K562 (cell line): ENCODE measurements at regions of chr20 and their contacts with region 1.

Region 1: DNA sequence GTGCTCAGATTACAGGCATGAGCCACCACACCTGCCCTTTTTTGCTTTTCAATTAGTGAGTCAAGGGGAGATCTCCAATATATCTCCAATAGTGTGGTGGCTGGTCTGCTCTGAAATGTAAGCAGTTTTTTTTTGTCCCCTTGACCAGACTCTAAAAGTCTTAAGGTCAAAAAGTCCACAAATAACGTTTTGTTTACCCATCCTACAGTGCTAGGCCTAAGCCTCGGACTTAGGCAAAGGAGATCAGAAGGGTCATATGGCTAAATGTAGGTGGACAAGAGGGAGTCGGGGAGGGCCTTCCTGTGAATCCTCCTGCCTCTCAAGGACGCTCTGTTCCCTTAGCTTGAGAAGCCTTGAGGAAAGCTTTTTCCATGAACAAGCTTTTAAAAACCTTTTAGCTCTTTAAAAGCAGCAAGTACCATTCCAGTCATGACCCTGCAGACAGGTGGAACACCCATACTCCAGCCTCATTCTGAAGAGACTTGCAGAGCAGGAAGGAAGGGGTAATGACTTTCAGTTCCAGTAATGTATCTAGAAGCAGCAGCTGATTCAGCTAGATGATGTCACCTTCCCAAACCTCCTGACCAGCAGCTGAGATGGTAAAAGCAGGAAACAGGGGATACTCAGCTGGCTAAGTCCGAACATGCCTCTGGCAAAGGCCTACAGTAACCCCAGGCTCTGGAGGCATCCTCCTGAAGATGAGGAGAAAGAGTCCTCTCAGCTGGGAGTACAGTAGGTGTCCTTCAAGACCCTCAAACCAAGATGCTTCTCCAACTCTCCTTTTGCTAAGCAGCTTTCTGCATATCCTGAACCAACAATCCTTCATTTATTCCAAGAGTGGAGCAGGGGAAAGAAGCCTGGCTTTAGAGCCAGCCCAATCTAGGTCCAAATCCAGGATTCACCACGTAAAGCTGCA is 23.6 kb downstream of the BCL2L1 start:
- DNase-seq: peak in 2 of 4 experiments; percentile 57 to 75
- ATAC-seq: peak; percentile 70
- H3K4me3 ChIP-seq: no peak overlapping the region
- H3K27ac ChIP-seq: peak overlapping the region; percentile 51; the same call in 2 of the 3 replicates
- H3K4me1 ChIP-seq: peaks cover 27 to 60% of the 10 kb centered on the region in 2 experiments
- H3K27me3 ChIP-seq: no peaks in the 10 kb centered on the region
- CTCF ChIP-seq: no peak
- EP300 ChIP-seq: peak; percentile 41; the same call in 1 of the 2 replicates
- POLR2A ChIP-seq: no peak
- RAD21 ChIP-seq: no peak

Region 2: DNA sequence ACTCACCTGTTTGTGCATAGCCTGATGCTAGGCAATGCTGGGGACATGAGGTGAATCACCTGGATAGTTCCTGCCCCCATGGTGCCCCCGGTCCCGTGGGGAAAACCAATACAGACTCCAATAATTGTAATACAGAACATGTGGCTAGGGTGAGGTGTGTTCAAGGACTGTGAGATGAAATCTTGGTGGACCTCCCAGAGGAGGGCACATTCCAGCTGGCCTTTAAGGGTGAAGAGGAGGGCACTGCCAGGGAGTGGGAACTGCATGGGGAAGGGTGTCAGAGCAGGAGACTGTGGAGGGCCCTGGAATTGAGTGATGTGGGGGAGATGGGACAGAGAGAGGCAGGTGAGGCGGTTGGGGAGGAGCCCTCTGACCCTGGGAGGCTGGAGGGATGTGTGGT is 58.8 kb before region 1 on chr20:
- CTCF ChIA-PET with region 1: no interaction called
- POLR2A ChIA-PET with region 1: no interaction called
- in situ Hi-C with region 1: no loop called
- intact Hi-C with region 1: no loop called
- DNase-seq: peak in 1 of 4 experiments; percentile 2
- ATAC-seq: no peak
- H3K4me3 ChIP-seq: no peak overlapping the region
- H3K27ac ChIP-seq: no peak overlapping the region
- H3K4me1 ChIP-seq: peaks cover 8 to 15% of the 10 kb centered on the region in 2 experiments
- H3K27me3 ChIP-seq: no peaks in the 10 kb centered on the region
- CTCF ChIP-seq: no peak
- EP300 ChIP-seq: no peak
- POLR2A ChIP-seq: no peak
- RAD21 ChIP-seq: no peak

Region 3: GRCh38 chr20:31674895-31675827 is 23.9 kb before region 1 on chr20:
- CTCF ChIA-PET with region 1: no interaction called
- POLR2A ChIA-PET with region 1: interaction called, 11 read pairs
- in situ Hi-C with region 1: no loop called
- intact Hi-C with region 1: no loop called
- DNase-seq: peak; percentile 76 to 91 (median 78)
- ATAC-seq: peak; percentile 60
- H3K4me3 ChIP-seq: peak overlapping the region; percentile 20; the same call in 1 of the 2 replicates
- H3K27ac ChIP-seq: peak overlapping the region; percentile 94
- H3K4me1 ChIP-seq: peaks cover 84 to 91% of the 10 kb centered on the region in 2 experiments
- H3K27me3 ChIP-seq: no peaks in the 10 kb centered on the region
- CTCF ChIP-seq: no peak
- EP300 ChIP-seq: peak; percentile 95
- POLR2A ChIP-seq: peak; percentile 70
- RAD21 ChIP-seq: peak in 1 of 2 experiments; percentile 12; a peak in 1 of 4 replicates

Region 4: DNA sequence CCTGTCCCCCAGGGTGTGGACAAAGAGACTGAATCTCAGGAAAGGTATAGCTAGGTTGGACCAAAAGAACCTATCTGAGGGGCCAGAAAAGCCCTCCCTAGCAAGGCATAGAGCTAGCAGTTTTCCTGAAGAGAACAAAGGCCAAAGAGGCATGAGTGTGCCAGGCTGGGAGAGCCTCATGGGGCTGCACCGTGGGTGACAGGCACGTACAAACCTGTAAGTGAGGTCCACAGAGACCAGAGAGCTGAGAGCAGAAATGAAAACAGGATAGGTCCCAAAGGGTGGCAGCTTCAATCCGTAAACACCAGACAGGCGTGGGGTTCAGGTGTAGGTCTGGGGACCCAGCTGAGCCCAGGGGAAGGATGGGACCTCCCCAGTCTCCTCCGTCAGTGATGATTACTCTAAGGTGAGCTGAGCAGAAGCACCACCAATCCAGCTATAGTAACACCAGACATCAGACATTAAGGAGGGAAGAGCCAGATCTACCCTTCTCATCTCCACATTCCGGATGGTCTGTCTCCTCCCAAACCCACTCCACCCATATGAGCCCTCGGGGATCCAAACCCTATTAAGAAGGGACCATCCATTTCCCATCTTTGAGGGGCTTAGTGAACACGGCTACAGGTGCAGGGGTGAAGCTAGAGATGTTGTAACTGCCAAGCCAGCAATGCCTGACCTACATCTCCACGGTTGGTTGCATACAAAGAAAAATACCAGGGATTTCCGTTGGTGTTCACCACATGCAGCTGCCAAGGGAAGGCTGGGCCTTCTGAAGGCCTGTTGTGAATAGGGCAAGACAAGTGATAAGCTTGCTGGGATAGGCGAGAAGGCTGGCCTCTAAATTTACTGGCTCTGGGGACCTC is 14.7 kb before region 1 on chr20:
- CTCF ChIA-PET with region 1: no interaction called
- POLR2A ChIA-PET with region 1: interaction called, 23 read pairs
- in situ Hi-C with region 1: no loop called
- intact Hi-C with region 1: no loop called
- DNase-seq: no peak
- ATAC-seq: peak; percentile 4
- H3K4me3 ChIP-seq: no peak overlapping the region
- H3K27ac ChIP-seq: peak overlapping the region; percentile 58
- H3K4me1 ChIP-seq: peaks cover 44 to 82% of the 10 kb centered on the region in 2 experiments
- H3K27me3 ChIP-seq: no peaks in the 10 kb centered on the region
- CTCF ChIP-seq: no peak
- EP300 ChIP-seq: no peak
- POLR2A ChIP-seq: no peak; the same call in 1 of the 2 replicates
- RAD21 ChIP-seq: no peak